Activated naive CD4-positive, alpha-beta T cell treated with anti-CD3 and anti-CD28 coated beads for 36 hours (primary cell): ENCODE measurements at regions of chr20 and their contacts with region 1.

Region 1: GRCh38 chr20:39049684-39050554 is 87.8 kb downstream of the DHX35 start:
- DNase-seq: peak; percentile 78
- H3K4me3 Mint-ChIP-seq: peak overlapping the region; percentile 76
- H3K27ac Mint-ChIP-seq: peak overlapping the region; percentile 18
- H3K4me1 Mint-ChIP-seq: peaks cover 6% of the 10 kb centered on the region
- H3K27me3 Mint-ChIP-seq: no peaks in the 10 kb centered on the region

Region 2: DNA sequence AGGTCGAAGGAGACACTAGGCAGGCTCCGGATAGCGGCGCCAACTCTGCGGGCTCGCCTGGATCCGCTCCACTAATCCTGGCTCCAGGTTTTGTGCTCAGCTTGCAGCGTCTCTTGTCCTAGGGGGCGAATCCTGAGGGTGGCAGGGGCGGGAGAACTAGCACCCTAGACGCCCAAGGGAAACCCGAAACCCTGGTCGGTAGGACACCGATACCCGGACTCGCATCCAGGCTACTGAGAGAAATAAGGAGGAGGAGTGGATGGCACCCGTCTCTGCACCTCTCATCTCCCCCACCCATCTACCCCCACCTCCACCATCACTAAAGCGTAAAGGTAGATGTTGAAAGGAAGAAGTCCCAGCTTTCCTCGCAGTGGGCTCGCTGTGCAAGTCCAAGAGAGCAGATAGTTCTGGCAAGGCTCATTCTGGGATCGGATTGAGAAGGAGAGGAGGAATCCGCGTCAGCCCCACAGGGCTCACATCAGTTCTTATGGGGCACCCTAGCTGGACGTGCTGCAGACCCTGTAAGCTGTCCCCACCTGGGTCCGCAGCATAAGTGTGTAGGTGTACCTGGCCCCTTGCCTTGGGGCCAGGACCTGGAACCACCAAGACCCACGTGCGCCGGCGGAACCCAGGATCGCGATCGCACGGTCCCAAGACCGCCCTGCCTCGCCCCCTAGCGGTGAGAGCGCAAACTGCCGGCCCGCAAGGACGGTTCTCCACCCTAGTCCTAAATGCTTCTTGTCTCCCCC is 318.8 kb before region 1 on chr20:
- CTCF ChIA-PET with region 1: interaction called, 7 read pairs
- intact Hi-C with region 1: loop called (anchors 2 kb)
- DNase-seq: peak; percentile 85
- H3K4me3 Mint-ChIP-seq: peak overlapping the region; percentile 61
- H3K27ac Mint-ChIP-seq: no peak overlapping the region
- H3K4me1 Mint-ChIP-seq: peaks cover 39% of the 10 kb centered on the region
- H3K27me3 Mint-ChIP-seq: peaks cover 85% of the 10 kb centered on the region

Region 3: DNA sequence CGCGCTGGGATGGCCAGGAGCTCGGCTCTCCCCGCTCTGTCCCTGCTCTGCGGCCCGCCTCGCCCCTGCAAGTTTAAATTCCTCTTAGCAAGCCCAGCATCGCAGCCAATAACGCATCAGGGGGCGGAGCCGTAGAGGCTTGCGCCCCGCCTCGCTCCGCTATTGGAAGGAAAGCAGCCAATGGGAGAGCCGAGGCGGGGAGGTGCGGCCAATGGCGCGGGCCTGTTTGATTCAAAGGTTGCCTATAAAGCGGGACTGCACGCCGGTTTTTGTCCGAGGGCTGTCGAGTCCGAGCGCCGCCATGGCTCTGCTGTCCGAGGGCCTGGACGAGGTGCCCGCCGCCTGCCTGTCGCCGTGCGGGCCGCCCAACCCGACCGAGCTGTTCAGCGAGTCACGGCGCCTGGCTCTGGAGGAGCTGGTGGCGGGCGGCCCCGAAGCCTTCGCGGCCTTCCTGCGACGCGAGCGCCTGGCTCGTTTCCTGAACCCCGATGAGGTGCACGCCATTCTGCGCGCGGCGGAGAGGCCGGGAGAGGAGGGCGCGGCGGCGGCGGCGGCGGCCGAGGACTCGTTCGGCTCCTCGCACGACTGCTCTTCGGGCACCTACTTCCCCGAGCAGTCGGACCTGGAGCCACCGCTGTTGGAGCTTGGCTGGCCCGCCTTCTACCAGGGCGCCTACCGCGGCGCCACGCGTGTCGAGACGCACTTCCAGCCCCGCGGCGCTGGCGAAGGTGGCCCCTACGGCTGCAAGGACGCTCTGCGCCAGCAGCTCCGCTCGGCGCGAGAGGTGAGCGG is 123.6 kb before region 1 on chr20 and contains the start of gene FAM83D:
- CTCF ChIA-PET with region 1: interaction called, 100 read pairs
- intact Hi-C with region 1: loop called (anchors 1 kb)
- DNase-seq: peak; percentile 97
- H3K4me3 Mint-ChIP-seq: peak within 1 kb of the TSS; percentile 80
- H3K27ac Mint-ChIP-seq: peak within 1 kb of the TSS; percentile 30
- H3K4me1 Mint-ChIP-seq: peaks cover 17% of the 10 kb centered on the region
- H3K27me3 Mint-ChIP-seq: no peaks in the 10 kb centered on the region
- total RNA-seq, gene FAM83D: 13.6 TPM

Region 4: DNA sequence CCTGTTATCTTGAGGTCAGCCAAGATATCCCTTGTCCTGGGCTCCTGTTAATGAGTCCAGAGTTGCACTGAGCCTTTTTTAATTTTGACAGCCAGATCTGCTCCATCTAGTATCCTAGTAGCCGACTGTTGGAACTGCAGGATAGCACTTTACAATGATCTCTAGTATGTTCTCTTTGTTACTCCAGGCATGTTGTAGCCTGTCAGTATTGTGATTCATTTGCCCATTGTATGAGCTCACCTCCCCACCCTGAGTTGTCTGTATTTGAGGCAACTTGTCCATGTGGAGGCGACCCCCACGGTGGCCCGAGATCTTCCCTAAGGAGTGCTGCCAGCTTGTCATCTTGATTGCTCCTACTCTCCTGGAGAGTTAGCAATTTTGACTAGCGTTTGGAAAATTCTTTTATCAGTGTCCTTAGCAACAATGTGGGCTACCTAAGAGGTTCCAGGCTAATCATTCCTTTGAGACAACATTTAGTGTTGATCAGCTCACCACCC is 20.5 kb before region 1 on chr20:
- CTCF ChIA-PET with region 1: interaction called, 11 read pairs
- intact Hi-C with region 1: no loop called
- DNase-seq: no peak
- H3K4me3 Mint-ChIP-seq: no peak overlapping the region
- H3K27ac Mint-ChIP-seq: no peak overlapping the region
- H3K4me1 Mint-ChIP-seq: peaks cover 4% of the 10 kb centered on the region
- H3K27me3 Mint-ChIP-seq: no peaks in the 10 kb centered on the region

Region 5: DNA sequence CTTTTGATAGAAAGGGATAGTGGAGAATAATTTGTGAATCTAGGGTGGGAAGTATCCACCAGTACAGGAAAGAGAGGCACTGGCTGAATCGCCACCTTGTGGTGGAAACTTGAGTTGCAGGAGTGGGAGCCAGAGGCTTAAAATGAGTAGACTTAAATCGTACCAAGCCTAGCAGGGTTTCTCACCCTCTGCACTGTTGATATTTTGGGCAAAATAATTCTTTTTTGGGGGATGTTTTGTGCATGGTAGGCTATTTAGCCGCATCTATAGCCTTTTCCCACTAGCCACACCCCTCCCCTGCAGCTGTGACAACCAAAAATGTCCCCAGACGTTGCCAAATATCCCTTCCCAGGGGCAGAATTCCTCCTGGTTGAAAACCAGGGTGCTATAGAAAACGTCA is 31.3 kb after region 1 on chr20:
- CTCF ChIA-PET with region 1: interaction called, 90 read pairs
- intact Hi-C with region 1: loop called (anchors 1 kb)
- DNase-seq: peak; percentile 90
- H3K4me3 Mint-ChIP-seq: no peak overlapping the region
- H3K27ac Mint-ChIP-seq: no peak overlapping the region
- H3K4me1 Mint-ChIP-seq: no peaks in the 10 kb centered on the region
- H3K27me3 Mint-ChIP-seq: peaks cover 18% of the 10 kb centered on the region

Region 6: DNA sequence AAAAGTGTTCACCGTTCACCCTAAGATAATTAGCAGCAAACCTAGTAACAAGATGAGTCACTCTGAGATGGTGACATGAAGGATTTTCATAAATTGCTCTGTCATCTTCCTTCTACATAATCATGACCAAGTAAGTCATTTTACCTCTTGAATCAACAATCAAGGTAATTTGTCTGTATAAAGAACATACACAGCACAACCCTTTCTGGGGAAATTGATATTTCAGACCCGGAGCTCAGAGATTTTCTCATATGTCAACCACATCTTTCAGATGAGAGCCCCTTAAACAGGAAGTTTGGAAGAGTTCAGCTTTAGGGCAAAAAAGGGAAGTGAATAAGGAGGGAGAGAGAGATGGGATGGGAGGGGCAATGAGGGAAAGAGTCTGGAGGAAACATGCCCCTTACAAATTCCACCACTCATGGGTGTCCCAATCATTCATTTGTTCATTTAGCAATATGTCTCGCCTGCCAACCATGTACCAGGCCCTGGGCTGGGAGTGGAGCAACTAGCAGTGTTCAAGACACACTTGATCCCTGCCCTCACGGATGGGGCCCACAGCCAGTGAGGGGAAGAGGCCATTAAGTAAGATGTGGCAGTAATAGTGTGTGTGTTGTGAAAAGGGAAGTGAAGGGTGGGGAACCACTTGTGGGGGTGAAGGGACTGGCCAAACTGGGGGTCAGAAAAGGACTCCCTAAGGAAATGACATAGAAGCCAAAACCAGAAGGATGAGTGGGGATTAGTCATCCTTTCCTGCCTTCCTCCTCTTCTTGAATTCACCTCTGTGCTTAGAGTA is 1448.2 kb after region 1 on chr20:
- CTCF ChIA-PET with region 1: no interaction called
- intact Hi-C with region 1: no loop called
- DNase-seq: no peak
- H3K4me3 Mint-ChIP-seq: no peak overlapping the region
- H3K27ac Mint-ChIP-seq: no peak overlapping the region
- H3K4me1 Mint-ChIP-seq: no peaks in the 10 kb centered on the region
- H3K27me3 Mint-ChIP-seq: peaks cover 3% of the 10 kb centered on the region